B cell (primary cell): ENCODE measurements at regions of chr20 and their contacts with region 1.

Region 1: DNA sequence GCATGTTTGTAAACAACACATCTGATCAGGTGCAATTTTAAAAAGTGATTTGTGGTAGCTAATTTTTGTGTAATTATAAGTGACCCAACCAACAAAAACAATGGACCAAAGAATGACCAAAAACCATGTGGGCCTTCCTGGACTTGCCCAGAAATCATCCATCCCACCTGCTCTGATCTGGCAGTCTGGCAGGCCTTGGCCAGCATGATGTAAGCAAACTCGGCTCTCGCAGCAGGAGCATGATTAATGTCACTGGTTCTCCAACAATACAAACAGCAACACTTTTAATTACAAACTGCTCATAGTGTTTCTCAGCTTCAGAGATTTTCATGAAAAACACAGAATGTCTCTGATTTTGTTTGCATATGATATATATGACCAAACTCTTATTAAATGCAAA is 16.1 kb downstream of the TP53INP2 start:
- DNase-seq: no peak
- ATAC-seq: no peak
- H3K4me3 ChIP-seq: no peak overlapping the region
- H3K4me3 Mint-ChIP-seq: no peak overlapping the region
- H3K27ac ChIP-seq: no peak overlapping the region
- H3K27ac Mint-ChIP-seq: no peak overlapping the region
- H3K4me1 ChIP-seq: peaks cover 0 to 5% of the 10 kb centered on the region in 2 donors
- H3K4me1 Mint-ChIP-seq: peaks cover 18% of the 10 kb centered on the region
- H3K27me3 ChIP-seq: no peaks in the 10 kb centered on the region
- H3K27me3 Mint-ChIP-seq: no peaks in the 10 kb centered on the region
- CTCF ChIP-seq: no peak

Region 2: DNA sequence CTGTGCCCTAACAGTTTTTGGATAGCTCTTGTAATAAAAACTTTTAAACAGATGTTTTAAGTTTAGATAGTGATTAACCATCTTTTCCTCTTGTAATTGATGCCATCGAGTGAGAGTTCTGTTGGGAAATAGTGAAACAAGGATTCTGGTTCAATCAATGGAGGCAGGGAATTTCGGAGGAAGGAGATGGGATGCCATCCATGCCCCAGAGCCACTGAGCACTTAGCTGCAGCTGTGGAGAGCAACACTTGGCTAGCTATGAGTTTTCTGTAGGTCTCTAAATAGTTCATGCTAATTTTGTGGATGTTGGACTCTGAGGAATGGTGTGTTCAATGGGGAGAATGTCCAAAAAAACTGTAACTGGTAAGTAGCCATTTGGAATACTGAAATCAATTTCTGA is 1213.7 kb before region 1 on chr20:
- CTCF ChIA-PET with region 1: no interaction called
- POLR2A ChIA-PET with region 1: interaction called, 12 read pairs
- intact Hi-C with region 1: no loop called
- DNase-seq: no peak
- ATAC-seq: no peak
- H3K4me3 ChIP-seq: no peak overlapping the region
- H3K4me3 Mint-ChIP-seq: no peak overlapping the region
- H3K27ac ChIP-seq: no peak overlapping the region
- H3K27ac Mint-ChIP-seq: no peak overlapping the region
- H3K4me1 ChIP-seq: peaks cover 3 to 7% of the 10 kb centered on the region in 2 donors
- H3K4me1 Mint-ChIP-seq: peaks cover 27% of the 10 kb centered on the region
- H3K27me3 ChIP-seq: no peaks in the 10 kb centered on the region
- H3K27me3 Mint-ChIP-seq: no peaks in the 10 kb centered on the region
- CTCF ChIP-seq: no peak